ENCODE measurements at regions of chr18 and their contacts with region 1.

Region 1: DNA sequence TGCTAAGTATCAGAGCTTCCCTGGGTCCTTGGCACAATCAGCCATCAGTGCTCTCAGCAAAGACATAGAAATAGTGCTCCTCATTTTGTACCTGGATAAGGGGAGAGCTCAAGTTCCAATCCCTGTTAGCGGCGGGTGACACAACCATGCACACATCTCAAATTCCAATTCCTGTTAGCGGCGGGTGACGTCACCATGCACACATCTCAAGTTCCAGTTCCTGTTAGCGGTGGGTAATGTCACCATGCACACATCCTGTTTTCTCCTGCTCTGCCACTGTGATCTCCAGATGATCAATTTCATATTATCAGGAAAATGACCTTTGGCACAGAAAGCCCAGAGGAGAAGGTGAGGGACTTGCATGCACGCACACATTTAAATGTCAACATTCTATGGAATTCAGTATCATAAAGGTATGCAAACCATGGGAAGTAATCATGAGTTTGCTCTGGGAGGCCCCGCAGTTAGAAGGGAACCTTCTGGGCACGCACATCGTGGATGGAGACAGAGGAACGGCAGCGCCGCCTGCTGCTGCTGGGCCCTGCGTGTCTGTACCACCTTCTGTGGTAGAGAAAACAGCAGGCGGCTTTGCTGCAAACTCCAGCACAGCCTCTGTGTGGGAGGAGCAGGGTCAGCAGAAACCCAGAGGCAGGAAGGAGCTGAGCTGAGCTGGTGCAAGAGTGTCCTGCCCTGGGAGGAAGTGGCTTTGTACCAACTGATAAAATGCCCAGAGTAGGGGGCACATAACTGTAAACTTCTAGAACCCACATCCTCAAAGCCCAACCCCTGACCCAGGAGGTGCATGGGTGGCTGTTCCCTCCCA is 77.8 kb downstream of the MBP start:
- DNase-seq: peak in 8 of 9 donors; percentile 72 to 85 (median 78)
- ATAC-seq: peak; percentile 89
- H3K4me3 ChIP-seq: peak overlapping the region; percentile 50
- H3K4me3 Mint-ChIP-seq: peak overlapping the region; percentile 66 to 91 (median 80)
- H3K27ac ChIP-seq: peak overlapping the region; percentile 83
- H3K27ac Mint-ChIP-seq: peak overlapping the region; percentile 93 to 100 (median 97)
- H3K4me1 ChIP-seq: peaks cover 53 to 76% of the 10 kb centered on the region in 2 donors
- H3K4me1 Mint-ChIP-seq: peaks cover 52 to 76% (median 70%) of the 10 kb centered on the region in 7 donors
- H3K27me3 ChIP-seq: no peaks in the 10 kb centered on the region
- H3K27me3 Mint-ChIP-seq: no peaks in the 10 kb centered on the region

Region 2: GRCh38 chr18:76803814-76804213 is 251.0 kb before region 1 on chr18:
- CTCF ChIA-PET with region 1: no interaction called
- POLR2A ChIA-PET with region 1: no interaction called
- intact Hi-C with region 1: loop called in 1 of 2 experiments (anchors 2 kb)
- DNase-seq: peak; percentile 33 to 73 (median 66)
- ATAC-seq: peak; percentile 84
- H3K4me3 ChIP-seq: no peak overlapping the region
- H3K4me3 Mint-ChIP-seq: peak overlapping the region in 9 of 10 donors; percentile 27 to 71 (median 53)
- H3K27ac ChIP-seq: no peak overlapping the region
- H3K27ac Mint-ChIP-seq: peak overlapping the region in 4 of 9 donors; percentile 4 to 40 (median 4)
- H3K4me1 ChIP-seq: peaks cover 5 to 8% of the 10 kb centered on the region in 2 donors
- H3K4me1 Mint-ChIP-seq: peaks cover 6 to 13% (median 8%) of the 10 kb centered on the region in 7 donors
- H3K27me3 ChIP-seq: no peaks in the 10 kb centered on the region
- H3K27me3 Mint-ChIP-seq: peaks cover 0 to 17% (median 7%) of the 10 kb centered on the region in 5 donors

Region 3: DNA sequence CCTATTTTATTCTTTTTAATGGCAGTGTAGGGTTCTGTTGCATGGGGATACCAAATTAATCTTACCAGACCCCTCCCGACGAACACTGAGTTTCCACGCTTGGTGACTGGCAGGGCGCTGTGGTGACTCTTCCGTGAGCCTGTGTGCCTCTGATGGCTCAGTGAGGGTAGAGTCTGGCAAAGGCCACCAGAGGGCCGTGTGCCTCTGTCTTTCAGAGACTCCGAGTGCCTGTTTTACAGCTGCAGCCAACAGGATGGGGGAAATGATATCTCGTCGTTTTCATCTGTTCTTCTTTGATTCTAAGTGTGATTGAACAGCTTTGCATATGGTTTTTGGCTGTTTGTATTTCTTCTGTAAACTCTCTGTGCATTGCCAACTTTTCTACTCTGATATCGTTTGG is 132.7 kb before region 1 on chr18:
- CTCF ChIA-PET with region 1: no interaction called
- POLR2A ChIA-PET with region 1: no interaction called
- intact Hi-C with region 1: loop called in 1 of 2 experiments (anchors 1 kb)
- DNase-seq: peak in 8 of 9 donors; percentile 40 to 72 (median 62)
- ATAC-seq: peak; percentile 98
- H3K4me3 ChIP-seq: no peak overlapping the region
- H3K4me3 Mint-ChIP-seq: peak overlapping the region in 1 of 10 donors; percentile 50
- H3K27ac ChIP-seq: no peak overlapping the region
- H3K27ac Mint-ChIP-seq: peak overlapping the region in 7 of 9 donors; percentile 1 to 78 (median 49)
- H3K4me1 ChIP-seq: no peaks in the 10 kb centered on the region
- H3K4me1 Mint-ChIP-seq: peaks cover 14 to 21% (median 18%) of the 10 kb centered on the region in 7 donors
- H3K27me3 ChIP-seq: no peaks in the 10 kb centered on the region
- H3K27me3 Mint-ChIP-seq: no peaks in the 10 kb centered on the region

Region 4: DNA sequence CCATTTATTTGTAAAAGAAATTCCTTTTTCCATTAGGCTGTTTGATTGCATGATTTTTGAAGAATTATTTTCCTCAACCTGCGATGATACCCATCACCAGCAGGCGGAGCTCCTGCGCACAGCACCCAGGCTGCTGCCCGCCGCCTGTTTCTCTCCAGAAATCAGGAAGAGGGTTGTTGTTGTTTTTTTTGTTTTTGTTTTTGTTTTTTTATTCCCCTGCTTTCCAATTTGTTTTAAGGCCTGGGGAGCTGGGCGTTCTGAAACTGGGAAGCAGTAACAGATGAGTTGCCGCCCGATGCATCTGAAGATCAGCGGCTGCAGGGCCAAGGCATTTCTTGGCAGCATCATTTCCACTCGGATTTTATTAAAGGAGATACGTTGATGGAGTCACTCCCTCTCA is 54.3 kb before region 1 on chr18:
- CTCF ChIA-PET with region 1: interaction called, 21 read pairs
- POLR2A ChIA-PET with region 1: interaction called, 4 read pairs
- intact Hi-C with region 1: loop called (anchors 1 kb)
- DNase-seq: peak in 7 of 9 donors; percentile 29 to 64 (median 50)
- ATAC-seq: peak; percentile 68
- H3K4me3 ChIP-seq: no peak overlapping the region
- H3K4me3 Mint-ChIP-seq: no peak overlapping the region
- H3K27ac ChIP-seq: no peak overlapping the region
- H3K27ac Mint-ChIP-seq: peak overlapping the region in 2 of 9 donors; percentile 11 to 41
- H3K4me1 ChIP-seq: peaks cover 7 to 10% of the 10 kb centered on the region in 2 donors
- H3K4me1 Mint-ChIP-seq: peaks cover 13 to 30% (median 28%) of the 10 kb centered on the region in 7 donors
- H3K27me3 ChIP-seq: no peaks in the 10 kb centered on the region
- H3K27me3 Mint-ChIP-seq: peaks cover 0 to 4% (median 0%) of the 10 kb centered on the region in 5 donors

Region 5: GRCh38 chr18:77032181-77032701 is 22.6 kb before region 1 on chr18:
- CTCF ChIA-PET with region 1: no interaction called
- POLR2A ChIA-PET with region 1: no interaction called
- intact Hi-C with region 1: no loop called
- DNase-seq: no peak
- ATAC-seq: peak; percentile 52
- H3K4me3 ChIP-seq: no peak overlapping the region
- H3K4me3 Mint-ChIP-seq: peak overlapping the region in 1 of 10 donors; percentile 42
- H3K27ac ChIP-seq: no peak overlapping the region
- H3K27ac Mint-ChIP-seq: peak overlapping the region in 2 of 9 donors; percentile 46 to 75
- H3K4me1 ChIP-seq: peaks cover 0 to 17% of the 10 kb centered on the region in 2 donors
- H3K4me1 Mint-ChIP-seq: peaks cover 22 to 58% (median 47%) of the 10 kb centered on the region in 7 donors
- H3K27me3 ChIP-seq: no peaks in the 10 kb centered on the region
- H3K27me3 Mint-ChIP-seq: no peaks in the 10 kb centered on the region

Region 6: GRCh38 chr18:77101410-77102258 is 46.8 kb after region 1 on chr18:
- CTCF ChIA-PET with region 1: no interaction called
- POLR2A ChIA-PET with region 1: interaction called, 4 read pairs
- intact Hi-C with region 1: loop called (anchors 1 kb)
- DNase-seq: peak in 2 of 9 donors; percentile 26 to 73
- ATAC-seq: peak; percentile 62
- H3K4me3 ChIP-seq: peak overlapping the region; percentile 45
- H3K4me3 Mint-ChIP-seq: peak overlapping the region; percentile 65 to 92 (median 82)
- H3K27ac ChIP-seq: peak overlapping the region; percentile 73
- H3K27ac Mint-ChIP-seq: peak overlapping the region; percentile 94 to 99 (median 98)
- H3K4me1 ChIP-seq: peaks cover 88 to 94% of the 10 kb centered on the region in 2 donors
- H3K4me1 Mint-ChIP-seq: peaks cover 71 to 100% (median 94%) of the 10 kb centered on the region in 7 donors
- H3K27me3 ChIP-seq: no peaks in the 10 kb centered on the region
- H3K27me3 Mint-ChIP-seq: no peaks in the 10 kb centered on the region

Region 7: DNA sequence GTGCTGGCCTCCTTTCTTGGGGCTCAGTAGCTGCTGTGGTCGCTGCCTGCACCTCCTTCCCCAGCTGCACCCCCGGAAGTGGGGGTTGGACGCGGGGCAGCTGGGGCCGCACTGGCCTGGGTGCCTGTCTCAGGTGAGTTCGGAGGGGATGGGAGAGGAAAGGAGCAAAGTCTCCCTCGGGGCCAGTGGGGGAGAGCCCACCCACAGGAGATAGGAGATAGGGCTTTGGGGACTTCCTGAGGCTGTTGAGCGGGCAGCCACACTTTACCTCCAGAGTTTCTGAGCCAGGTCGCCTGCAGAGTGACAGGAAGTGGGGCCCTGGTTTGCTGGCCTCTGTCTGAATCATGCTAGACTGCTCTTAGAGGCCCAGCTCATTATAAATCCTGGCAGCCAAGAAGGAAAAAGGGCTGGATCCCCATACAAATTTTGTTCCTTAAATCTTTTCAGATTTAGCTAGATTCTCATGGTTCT is 69.7 kb after region 1 on chr18:
- CTCF ChIA-PET with region 1: no interaction called
- POLR2A ChIA-PET with region 1: interaction called, 7 read pairs
- intact Hi-C with region 1: loop called (anchors 1 to 2 kb)
- DNase-seq: peak in 2 of 9 donors; percentile 33 to 56
- ATAC-seq: peak; percentile 46
- H3K4me3 ChIP-seq: peak overlapping the region; percentile 31
- H3K4me3 Mint-ChIP-seq: peak overlapping the region; percentile 65 to 97 (median 77)
- H3K27ac ChIP-seq: peak overlapping the region; percentile 62
- H3K27ac Mint-ChIP-seq: peak overlapping the region; percentile 21 to 92 (median 81)
- H3K4me1 ChIP-seq: peaks cover 77 to 81% of the 10 kb centered on the region in 2 donors
- H3K4me1 Mint-ChIP-seq: peaks cover 70 to 100% (median 98%) of the 10 kb centered on the region in 7 donors
- H3K27me3 ChIP-seq: no peaks in the 10 kb centered on the region
- H3K27me3 Mint-ChIP-seq: no peaks in the 10 kb centered on the region

Region 8: GRCh38 chr18:77207540-77207939 is 152.7 kb after region 1 on chr18:
- CTCF ChIA-PET with region 1: interaction called, 6 read pairs
- POLR2A ChIA-PET with region 1: interaction called, 3 read pairs
- intact Hi-C with region 1: loop called in 1 of 2 experiments (anchors 1 kb)
- DNase-seq: peak in 7 of 9 donors; percentile 53 to 74 (median 62)
- ATAC-seq: peak; percentile 91
- H3K4me3 ChIP-seq: no peak overlapping the region
- H3K4me3 Mint-ChIP-seq: peak overlapping the region; percentile 54 to 99 (median 72)
- H3K27ac ChIP-seq: no peak overlapping the region
- H3K27ac Mint-ChIP-seq: peak overlapping the region; percentile 37 to 99 (median 70)
- H3K4me1 ChIP-seq: peaks cover 23 to 33% of the 10 kb centered on the region in 2 donors
- H3K4me1 Mint-ChIP-seq: peaks cover 24 to 55% (median 47%) of the 10 kb centered on the region in 7 donors
- H3K27me3 ChIP-seq: no peaks in the 10 kb centered on the region
- H3K27me3 Mint-ChIP-seq: peaks cover 0 to 9% (median 0%) of the 10 kb centered on the region in 5 donors

Measured in naive thymus-derived CD4-positive, alpha-beta T cell (primary cell).